ENCODE measurements at regions of chr5 and their contacts with region 1.

Region 1: DNA sequence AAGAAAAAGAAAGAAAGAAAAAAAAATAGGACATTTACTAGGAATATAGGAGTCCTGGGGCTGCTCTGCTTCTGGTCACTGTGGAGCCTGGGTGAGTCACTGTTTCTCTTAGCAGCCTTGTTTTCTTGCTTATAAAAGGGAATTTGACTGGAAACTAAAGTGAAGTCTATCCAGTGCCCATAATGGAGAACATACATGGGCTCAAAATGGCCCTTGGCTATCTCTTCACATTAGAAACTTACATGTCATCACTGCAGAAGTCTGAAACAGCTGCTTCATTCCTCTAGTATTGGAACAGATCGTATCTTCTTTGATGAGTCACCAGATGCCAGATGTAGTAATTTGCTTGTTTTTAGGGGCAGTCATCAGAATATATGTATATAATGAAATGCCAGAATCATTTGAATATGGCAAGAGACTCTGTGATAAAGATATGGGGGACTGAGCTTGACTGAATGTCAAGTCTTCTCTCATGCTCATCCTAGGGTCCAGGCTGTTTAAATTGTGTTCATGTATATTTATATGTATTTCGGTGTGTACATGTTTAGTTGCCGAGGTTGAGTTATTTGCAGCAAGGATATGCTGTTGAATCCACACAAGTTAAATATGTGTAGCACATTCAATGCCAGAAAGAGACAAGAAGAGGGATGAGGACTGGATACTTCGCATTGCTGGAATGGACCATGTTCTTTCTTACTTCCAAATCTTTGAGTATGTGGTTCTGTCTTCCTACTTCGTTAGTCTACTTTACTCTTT is 56.7 kb downstream of the SGCD start:
- DNase-seq: peak; percentile 90
- ATAC-seq: peak; percentile 65
- H3K4me3 ChIP-seq: no peak overlapping the region
- H3K27ac ChIP-seq: peak overlapping the region; percentile 53; the same call in 1 of the 2 replicates
- H3K4me1 ChIP-seq: peaks cover 18% of the 10 kb centered on the region
- H3K27me3 ChIP-seq: no peaks in the 10 kb centered on the region
- CTCF ChIP-seq: no peak
- POLR2A ChIP-seq: no peak
- RAD21 ChIP-seq: no peak

Region 2: DNA sequence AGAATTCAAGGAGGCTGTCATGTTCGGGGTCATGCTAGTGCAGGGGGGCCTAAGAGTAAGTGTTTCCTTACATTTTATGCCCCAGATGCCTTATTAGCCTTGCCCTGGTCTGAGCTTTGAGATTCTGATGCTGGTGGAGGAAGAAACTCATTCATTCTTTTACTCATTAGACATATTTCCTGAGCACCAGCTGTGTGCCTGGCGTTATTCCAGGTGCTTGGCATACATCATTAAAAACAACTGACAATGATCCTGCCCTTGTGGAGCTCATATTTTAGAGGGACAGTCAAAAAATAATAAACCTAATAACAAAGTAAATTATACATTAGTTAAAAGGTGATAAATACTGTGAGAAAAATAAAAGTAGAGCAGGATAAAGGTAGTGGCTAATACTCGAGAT is 195.7 kb before region 1 on chr5:
- CTCF ChIA-PET with region 1: no interaction called
- POLR2A ChIA-PET with region 1: no interaction called
- dilution Hi-C with region 1: no loop called
- in situ Hi-C with region 1: no loop called
- intact Hi-C with region 1: loop called (anchors 5 kb)
- DNase-seq: peak; percentile 10
- ATAC-seq: no peak
- H3K4me3 ChIP-seq: no peak overlapping the region
- H3K27ac ChIP-seq: no peak overlapping the region
- H3K4me1 ChIP-seq: peaks cover 7% of the 10 kb centered on the region; the same call in 1 of the 2 replicates
- H3K27me3 ChIP-seq: no peaks in the 10 kb centered on the region
- CTCF ChIP-seq: no peak
- POLR2A ChIP-seq: no peak
- RAD21 ChIP-seq: no peak

Region 3: GRCh38 chr5:156271569-156271968 is 112.1 kb before region 1 on chr5:
- CTCF ChIA-PET with region 1: no interaction called
- POLR2A ChIA-PET with region 1: no interaction called
- dilution Hi-C with region 1: no loop called
- in situ Hi-C with region 1: no loop called
- intact Hi-C with region 1: no loop called
- DNase-seq: no peak
- ATAC-seq: no peak
- H3K4me3 ChIP-seq: no peak overlapping the region
- H3K27ac ChIP-seq: no peak overlapping the region
- H3K4me1 ChIP-seq: peaks cover 3% of the 10 kb centered on the region
- H3K27me3 ChIP-seq: no peaks in the 10 kb centered on the region
- CTCF ChIP-seq: no peak
- POLR2A ChIP-seq: no peak
- RAD21 ChIP-seq: no peak